Left ventricle myocardium inferior (tissue), 1 donor: ENCODE measurements at regions of chr9 and their contacts with region 1.

Region 1: DNA sequence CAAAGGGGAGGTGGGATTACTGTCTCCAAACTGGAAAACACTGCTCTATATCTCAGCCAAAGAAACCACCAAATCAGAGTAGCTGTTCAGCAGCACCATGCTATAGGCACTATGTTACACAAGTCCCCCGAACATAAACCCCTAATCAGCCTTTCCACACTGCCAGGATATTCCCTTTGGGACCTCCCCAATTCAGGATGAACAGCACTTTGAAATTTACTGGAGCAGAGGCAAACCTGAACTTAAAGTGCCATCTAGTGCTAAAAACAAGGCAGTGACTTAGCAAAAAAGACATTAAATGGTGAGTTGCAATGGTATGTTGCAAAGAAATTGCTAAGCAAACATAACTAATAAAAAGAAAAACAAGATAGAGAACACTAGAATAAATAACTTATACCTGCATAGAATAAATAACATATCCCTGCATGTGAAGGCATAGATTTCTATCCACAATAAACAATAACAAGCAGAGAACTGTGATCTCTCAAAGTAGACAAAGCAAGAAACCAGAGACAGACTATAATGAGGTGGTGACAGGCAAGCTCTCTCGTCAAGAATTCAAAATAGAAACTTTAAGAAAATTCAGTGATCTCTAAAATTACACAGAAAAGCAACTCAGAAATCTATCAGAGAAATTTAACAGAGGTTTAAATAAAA is 584.4 kb upstream of the ACO1 start:
- DNase-seq: no peak
- H3K4me3 ChIP-seq: no peak overlapping the region
- H3K27ac ChIP-seq: no peak overlapping the region
- H3K4me1 ChIP-seq: no peaks in the 10 kb centered on the region
- H3K27me3 ChIP-seq: no peaks in the 10 kb centered on the region
- CTCF ChIP-seq: peak; percentile 51

Region 2: DNA sequence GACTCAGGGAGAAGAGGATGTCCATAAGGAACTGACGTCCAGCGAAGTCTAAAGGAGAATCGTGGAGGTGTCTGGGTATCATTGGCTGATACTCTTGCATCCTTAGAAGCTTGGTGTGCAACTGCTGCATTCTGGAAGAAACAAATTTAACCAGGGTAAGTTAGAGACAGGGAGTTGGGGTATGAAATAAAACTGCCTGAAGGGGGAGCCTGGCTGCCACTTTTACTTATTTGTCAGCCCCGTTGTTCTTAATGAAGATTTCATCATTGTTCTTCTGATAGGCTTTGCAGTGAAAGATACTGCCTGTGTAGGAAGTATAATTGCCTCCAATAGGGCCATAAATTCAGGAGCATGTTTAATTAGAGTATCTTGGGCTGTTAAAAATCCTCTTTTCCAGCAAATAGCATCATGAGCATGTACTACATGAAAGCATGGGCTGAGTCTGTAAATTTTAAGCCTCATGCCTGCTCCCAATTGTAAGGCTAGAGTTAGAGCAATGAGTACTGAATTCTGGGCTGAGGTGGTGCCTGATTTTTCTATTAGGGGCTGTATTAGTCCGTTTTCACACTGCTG is 680.1 kb before region 1 on chr9:
- intact Hi-C with region 1: loop called (anchors 5 kb)
- DNase-seq: no peak
- H3K4me3 ChIP-seq: no peak overlapping the region
- H3K27ac ChIP-seq: no peak overlapping the region
- H3K4me1 ChIP-seq: no peaks in the 10 kb centered on the region
- H3K27me3 ChIP-seq: no peaks in the 10 kb centered on the region
- CTCF ChIP-seq: peak; percentile 64

Region 3: GRCh38 chr9:31700252-31701045 is 99.6 kb before region 1 on chr9:
- intact Hi-C with region 1: no loop called
- DNase-seq: no peak
- H3K4me3 ChIP-seq: no peak overlapping the region
- H3K27ac ChIP-seq: no peak overlapping the region
- H3K4me1 ChIP-seq: no peaks in the 10 kb centered on the region
- H3K27me3 ChIP-seq: no peaks in the 10 kb centered on the region
- CTCF ChIP-seq: no peak